Naive thymus-derived CD4-positive, alpha-beta T cell (primary cell): ENCODE measurements at regions of chr5 and their contacts with region 1.

Region 1: DNA sequence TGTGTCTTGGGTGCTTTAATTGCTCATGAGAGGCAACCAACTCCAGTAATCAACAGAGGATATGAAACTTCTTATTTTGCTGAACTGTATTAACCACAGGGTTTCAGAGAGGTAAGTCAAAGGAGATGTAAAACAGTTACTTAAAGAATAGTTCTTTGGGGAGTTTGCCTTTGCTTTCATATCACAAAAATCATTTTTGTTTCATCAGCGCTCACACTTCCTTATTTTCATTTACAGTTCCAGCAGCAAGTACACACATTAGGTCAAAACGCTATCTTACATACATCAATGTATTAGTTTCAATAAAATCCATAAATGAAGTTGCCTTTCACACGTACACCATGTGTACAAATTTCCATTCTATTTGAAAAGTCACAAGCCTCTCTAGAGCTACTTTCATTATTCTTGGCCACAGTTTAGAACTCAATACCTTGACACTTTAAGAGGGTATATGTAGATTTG is 50.1 kb downstream of the ST8SIA4 start:
- DNase-seq: peak in 2 of 9 donors; percentile 5 to 6
- ATAC-seq: peak; percentile 76
- H3K4me3 ChIP-seq: no peak overlapping the region
- H3K4me3 Mint-ChIP-seq: peak overlapping the region in 8 of 10 donors; percentile 22 to 87 (median 53)
- H3K27ac ChIP-seq: no peak overlapping the region
- H3K27ac Mint-ChIP-seq: peak overlapping the region in 8 of 9 donors; percentile 30 to 97 (median 64)
- H3K4me1 ChIP-seq: peaks cover 9 to 11% of the 10 kb centered on the region in 2 donors
- H3K4me1 Mint-ChIP-seq: peaks cover 28 to 45% (median 41%) of the 10 kb centered on the region in 7 donors
- H3K27me3 ChIP-seq: no peaks in the 10 kb centered on the region
- H3K27me3 Mint-ChIP-seq: no peaks in the 10 kb centered on the region

Region 2: DNA sequence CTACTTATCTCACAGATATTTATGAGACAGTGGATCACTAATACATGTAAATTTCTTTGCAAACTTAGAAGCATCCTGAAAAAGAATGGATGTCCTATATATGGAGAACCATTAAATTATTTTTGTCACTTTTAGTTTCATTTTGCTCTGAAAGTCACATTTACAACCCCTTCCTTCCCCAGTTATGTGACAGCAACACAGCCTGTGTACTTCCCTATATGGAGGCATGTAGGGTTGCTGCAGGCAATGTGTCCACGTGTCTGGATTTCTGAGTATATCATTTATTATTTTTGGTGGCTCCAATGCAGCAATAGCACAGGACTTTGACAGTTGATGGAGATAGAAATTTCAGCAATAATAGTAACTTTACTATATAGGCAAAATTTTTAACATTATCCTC is 106.3 kb before region 1 on chr5:
- CTCF ChIA-PET with region 1: no interaction called
- POLR2A ChIA-PET with region 1: no interaction called
- intact Hi-C with region 1: no loop called
- DNase-seq: no peak
- ATAC-seq: peak; percentile 70
- H3K4me3 ChIP-seq: no peak overlapping the region
- H3K4me3 Mint-ChIP-seq: peak overlapping the region in 5 of 10 donors; percentile 14 to 74 (median 43)
- H3K27ac ChIP-seq: no peak overlapping the region
- H3K27ac Mint-ChIP-seq: peak overlapping the region in 1 of 9 donors; percentile 54
- H3K4me1 ChIP-seq: no peaks in the 10 kb centered on the region
- H3K4me1 Mint-ChIP-seq: peaks cover 2 to 10% (median 8%) of the 10 kb centered on the region in 7 donors
- H3K27me3 ChIP-seq: no peaks in the 10 kb centered on the region
- H3K27me3 Mint-ChIP-seq: peaks cover 0 to 21% (median 0%) of the 10 kb centered on the region in 5 donors

Region 3: DNA sequence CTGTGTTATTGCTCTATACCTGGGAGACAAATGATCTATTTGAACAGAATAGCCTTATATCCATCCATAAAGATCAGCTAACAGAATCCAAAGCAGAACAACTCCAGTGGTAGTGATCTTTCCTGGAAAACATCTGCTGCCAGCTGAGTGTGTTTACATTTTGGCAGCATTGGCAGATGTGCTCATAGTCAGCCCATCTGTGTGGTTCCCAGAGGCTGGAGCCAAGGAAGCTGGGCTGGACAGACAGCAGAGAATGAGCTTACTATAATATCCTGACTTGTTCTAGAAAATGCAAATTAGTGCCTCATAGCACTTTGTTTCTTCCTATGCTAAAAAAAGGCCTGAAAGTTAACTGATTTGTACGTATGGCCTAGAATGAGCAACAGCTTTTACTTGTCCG is 49.6 kb before region 1 on chr5:
- CTCF ChIA-PET with region 1: no interaction called
- POLR2A ChIA-PET with region 1: no interaction called
- intact Hi-C with region 1: no loop called
- DNase-seq: no peak
- ATAC-seq: no peak
- H3K4me3 ChIP-seq: no peak overlapping the region
- H3K4me3 Mint-ChIP-seq: no peak overlapping the region
- H3K27ac ChIP-seq: no peak overlapping the region
- H3K27ac Mint-ChIP-seq: no peak overlapping the region
- H3K4me1 ChIP-seq: no peaks in the 10 kb centered on the region
- H3K4me1 Mint-ChIP-seq: peaks cover 0 to 5% (median 0%) of the 10 kb centered on the region in 7 donors
- H3K27me3 ChIP-seq: no peaks in the 10 kb centered on the region
- H3K27me3 Mint-ChIP-seq: no peaks in the 10 kb centered on the region

Region 4: DNA sequence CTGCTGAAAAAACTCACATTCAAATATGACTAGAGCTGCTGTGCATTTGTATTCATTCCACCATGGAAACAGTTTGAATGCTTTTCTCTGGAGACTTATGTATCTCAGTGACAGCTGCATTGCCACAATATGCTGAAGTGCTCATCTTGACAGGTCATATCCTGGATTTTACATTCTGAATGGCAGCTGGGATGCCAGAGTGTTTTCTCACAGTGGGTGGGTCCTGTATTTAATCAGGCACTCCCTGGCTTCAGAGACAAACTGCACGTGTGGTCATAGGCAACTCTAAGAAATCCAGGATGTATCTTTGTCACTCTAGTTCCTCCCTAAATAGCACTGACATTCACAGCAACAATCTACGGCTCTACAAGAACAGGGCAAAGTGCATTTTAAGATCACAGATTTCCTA is 25.5 kb before region 1 on chr5:
- CTCF ChIA-PET with region 1: no interaction called
- POLR2A ChIA-PET with region 1: no interaction called
- intact Hi-C with region 1: no loop called
- DNase-seq: no peak
- ATAC-seq: no peak
- H3K4me3 ChIP-seq: no peak overlapping the region
- H3K4me3 Mint-ChIP-seq: no peak overlapping the region
- H3K27ac ChIP-seq: no peak overlapping the region
- H3K27ac Mint-ChIP-seq: peak overlapping the region in 3 of 9 donors; percentile 31 to 45 (median 38)
- H3K4me1 ChIP-seq: peaks cover 0 to 13% of the 10 kb centered on the region in 2 donors
- H3K4me1 Mint-ChIP-seq: peaks cover 6 to 36% (median 28%) of the 10 kb centered on the region in 7 donors
- H3K27me3 ChIP-seq: no peaks in the 10 kb centered on the region
- H3K27me3 Mint-ChIP-seq: no peaks in the 10 kb centered on the region

Region 5: DNA sequence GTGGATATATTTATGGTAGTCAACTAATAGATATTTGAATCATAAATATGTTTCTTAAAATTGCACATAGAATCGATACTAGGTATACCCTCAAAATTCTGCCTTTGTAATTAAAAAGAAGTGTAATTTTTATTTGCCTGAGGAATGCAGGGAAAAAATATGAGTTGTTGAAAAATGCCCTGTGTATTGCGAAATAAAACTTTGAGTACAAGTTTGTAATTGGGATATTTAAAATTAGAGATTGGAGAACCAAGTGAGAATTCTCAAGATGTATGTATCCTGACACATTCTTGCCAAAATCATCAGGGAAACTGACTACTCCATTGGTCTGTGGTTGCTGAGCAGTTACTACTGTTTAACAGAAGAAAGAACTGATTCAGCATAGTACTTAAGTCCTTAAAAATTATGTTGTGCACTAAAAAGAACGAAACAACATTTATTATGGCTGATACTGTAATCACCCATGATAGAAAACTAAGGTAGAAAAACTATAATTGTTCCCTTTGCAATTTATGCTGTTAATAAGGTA is 14.1 kb after region 1 on chr5:
- CTCF ChIA-PET with region 1: no interaction called
- POLR2A ChIA-PET with region 1: interaction called, 3 read pairs
- intact Hi-C with region 1: loop called in 1 of 2 experiments (anchors 2 kb)
- DNase-seq: no peak
- ATAC-seq: no peak
- H3K4me3 ChIP-seq: no peak overlapping the region
- H3K4me3 Mint-ChIP-seq: no peak overlapping the region
- H3K27ac ChIP-seq: no peak overlapping the region
- H3K27ac Mint-ChIP-seq: peak overlapping the region in 1 of 9 donors; percentile 29
- H3K4me1 ChIP-seq: no peaks in the 10 kb centered on the region
- H3K4me1 Mint-ChIP-seq: peaks cover 8 to 38% (median 28%) of the 10 kb centered on the region in 7 donors
- H3K27me3 ChIP-seq: no peaks in the 10 kb centered on the region
- H3K27me3 Mint-ChIP-seq: no peaks in the 10 kb centered on the region

Region 6: DNA sequence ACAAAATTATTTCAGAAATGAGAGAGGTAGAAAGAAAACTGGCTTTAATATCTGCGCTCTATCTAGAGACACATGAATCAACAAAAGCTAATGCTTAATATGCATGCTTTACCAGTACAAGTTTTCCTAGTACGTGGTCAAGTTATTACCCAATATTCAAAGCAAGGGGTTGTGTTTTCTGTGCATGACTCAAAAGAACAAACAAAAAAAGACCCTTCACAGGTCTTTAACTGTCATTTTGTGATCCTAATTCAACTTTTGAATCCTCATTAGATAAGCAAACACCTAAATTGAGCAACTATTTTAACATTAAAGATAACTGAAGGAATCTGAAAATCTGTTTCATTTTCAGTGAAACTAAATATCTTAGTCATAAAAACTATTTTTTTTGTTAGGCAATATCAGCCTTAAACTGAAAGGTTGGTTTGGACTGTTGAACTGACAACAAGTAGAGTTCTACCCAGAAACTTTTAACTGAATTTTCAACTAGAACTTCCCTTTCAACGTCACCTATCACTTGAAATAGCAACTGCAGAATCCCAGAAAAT is 37.5 kb after region 1 on chr5:
- CTCF ChIA-PET with region 1: no interaction called
- POLR2A ChIA-PET with region 1: no interaction called
- intact Hi-C with region 1: loop called (anchors 1 to 2 kb)
- DNase-seq: no peak
- ATAC-seq: peak; percentile 47
- H3K4me3 ChIP-seq: peak overlapping the region; percentile 10
- H3K4me3 Mint-ChIP-seq: peak overlapping the region in 9 of 10 donors; percentile 6 to 81 (median 69)
- H3K27ac ChIP-seq: no peak overlapping the region
- H3K27ac Mint-ChIP-seq: peak overlapping the region; percentile 39 to 92 (median 72)
- H3K4me1 ChIP-seq: peaks cover 26 to 34% of the 10 kb centered on the region in 2 donors
- H3K4me1 Mint-ChIP-seq: peaks cover 27 to 83% (median 71%) of the 10 kb centered on the region in 7 donors
- H3K27me3 ChIP-seq: no peaks in the 10 kb centered on the region
- H3K27me3 Mint-ChIP-seq: no peaks in the 10 kb centered on the region